CD4-positive, alpha-beta memory T cell (primary cell): ENCODE measurements at regions of chr5 and their contacts with region 1.

Region 1: GRCh38 chr5:50667653-50668595 is 1.5 kb downstream of the PARP8 start:
- DNase-seq: peak; percentile 88 to 94 (median 91)
- H3K4me3 ChIP-seq: peak overlapping the region; percentile 65 to 68
- H3K4me3 Mint-ChIP-seq: peak overlapping the region; percentile 91 to 98 (median 96)
- H3K27ac ChIP-seq: peak overlapping the region; percentile 99
- H3K27ac Mint-ChIP-seq: peak overlapping the region; percentile 96 to 100 (median 99)
- H3K4me1 ChIP-seq: peaks cover 51% of the 10 kb centered on the region
- H3K4me1 Mint-ChIP-seq: peaks cover 32 to 69% (median 44%) of the 10 kb centered on the region in 4 donors
- H3K27me3 ChIP-seq: no peaks in the 10 kb centered on the region
- H3K27me3 Mint-ChIP-seq: peaks cover 0 to 4% of the 10 kb centered on the region in 2 donors

Region 2: DNA sequence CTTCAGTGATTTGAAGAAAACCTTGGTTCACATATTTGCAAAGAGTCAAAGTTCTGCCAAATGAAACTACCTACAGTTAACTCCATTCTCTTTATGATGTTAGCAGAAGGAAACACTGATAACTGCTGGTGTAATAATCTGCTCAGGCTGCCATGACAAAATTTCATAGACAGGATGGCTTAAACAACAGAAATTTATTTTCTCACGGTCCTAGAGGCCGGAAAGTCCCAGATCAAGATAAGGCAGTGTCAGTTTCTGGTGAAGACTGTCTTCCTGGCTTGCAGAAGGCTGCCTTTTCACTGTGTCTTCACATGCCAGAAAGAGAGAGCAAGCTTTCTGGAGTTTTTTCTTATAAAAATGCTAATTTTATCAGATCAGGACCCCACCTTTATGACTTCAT is 103.8 kb before region 1 on chr5:
- CTCF ChIA-PET with region 1: no interaction called
- POLR2A ChIA-PET with region 1: interaction called, 3 read pairs
- intact Hi-C with region 1: loop called (anchors 5 kb)
- DNase-seq: peak; percentile 37 to 79 (median 66)
- H3K4me3 ChIP-seq: no peak overlapping the region
- H3K4me3 Mint-ChIP-seq: peak overlapping the region in 7 of 8 donors; percentile 17 to 80 (median 70)
- H3K27ac ChIP-seq: peak overlapping the region; percentile 32
- H3K27ac Mint-ChIP-seq: peak overlapping the region; percentile 36 to 91 (median 75)
- H3K4me1 ChIP-seq: peaks cover 32% of the 10 kb centered on the region
- H3K4me1 Mint-ChIP-seq: peaks cover 19 to 51% (median 38%) of the 10 kb centered on the region in 4 donors
- H3K27me3 ChIP-seq: no peaks in the 10 kb centered on the region
- H3K27me3 Mint-ChIP-seq: no peaks in the 10 kb centered on the region

Region 3: DNA sequence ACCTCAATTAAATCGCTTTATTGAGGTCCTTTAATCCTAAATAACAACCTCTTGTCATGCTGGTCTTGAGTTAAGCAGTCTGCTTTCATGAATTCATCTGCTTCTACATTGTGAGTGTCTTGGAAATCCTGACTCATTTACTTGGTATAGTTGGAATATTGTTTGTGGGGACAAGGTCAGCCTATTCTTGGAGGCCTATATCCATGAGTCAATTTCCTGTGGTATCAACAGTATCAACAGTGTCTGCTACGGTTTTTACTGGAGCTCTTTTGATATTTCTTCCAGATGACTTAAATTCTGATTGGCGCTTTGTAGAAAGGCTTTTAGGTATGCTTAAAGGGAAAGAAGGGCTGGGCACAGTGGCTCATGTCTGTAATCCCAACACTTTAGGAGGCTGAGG is 72.7 kb before region 1 on chr5:
- CTCF ChIA-PET with region 1: interaction called, 3 read pairs
- POLR2A ChIA-PET with region 1: interaction called, 4 read pairs
- intact Hi-C with region 1: loop called (anchors 1 kb)
- DNase-seq: no peak
- H3K4me3 ChIP-seq: no peak overlapping the region
- H3K4me3 Mint-ChIP-seq: peak overlapping the region in 2 of 8 donors; percentile 31 to 57
- H3K27ac ChIP-seq: no peak overlapping the region
- H3K27ac Mint-ChIP-seq: peak overlapping the region in 5 of 7 donors; percentile 46 to 90 (median 64)
- H3K4me1 ChIP-seq: peaks cover 56% of the 10 kb centered on the region
- H3K4me1 Mint-ChIP-seq: peaks cover 39 to 65% (median 46%) of the 10 kb centered on the region in 4 donors
- H3K27me3 ChIP-seq: no peaks in the 10 kb centered on the region
- H3K27me3 Mint-ChIP-seq: no peaks in the 10 kb centered on the region

Region 4: GRCh38 chr5:50702615-50703366 is 34.9 kb after region 1 on chr5:
- CTCF ChIA-PET with region 1: no interaction called
- POLR2A ChIA-PET with region 1: interaction called, 16 read pairs
- intact Hi-C with region 1: no loop called
- DNase-seq: peak in 3 of 5 donors; percentile 15 to 22 (median 19)
- H3K4me3 ChIP-seq: no peak overlapping the region
- H3K4me3 Mint-ChIP-seq: peak overlapping the region in 7 of 8 donors; percentile 62 to 81 (median 77)
- H3K27ac ChIP-seq: no peak overlapping the region
- H3K27ac Mint-ChIP-seq: peak overlapping the region; percentile 82 to 98 (median 94)
- H3K4me1 ChIP-seq: peaks cover 93% of the 10 kb centered on the region
- H3K4me1 Mint-ChIP-seq: peaks cover 60 to 98% (median 76%) of the 10 kb centered on the region in 4 donors
- H3K27me3 ChIP-seq: no peaks in the 10 kb centered on the region
- H3K27me3 Mint-ChIP-seq: no peaks in the 10 kb centered on the region

Region 5: GRCh38 chr5:50738864-50739263 is 70.9 kb after region 1 on chr5:
- CTCF ChIA-PET with region 1: interaction called, 3 read pairs
- POLR2A ChIA-PET with region 1: interaction called, 23 read pairs
- intact Hi-C with region 1: loop called (anchors 1 kb)
- DNase-seq: no peak
- H3K4me3 ChIP-seq: no peak overlapping the region
- H3K4me3 Mint-ChIP-seq: no peak overlapping the region
- H3K27ac ChIP-seq: no peak overlapping the region
- H3K27ac Mint-ChIP-seq: peak overlapping the region in 5 of 7 donors; percentile 27 to 79 (median 62)
- H3K4me1 ChIP-seq: peaks cover 69% of the 10 kb centered on the region
- H3K4me1 Mint-ChIP-seq: peaks cover 53 to 80% (median 67%) of the 10 kb centered on the region in 4 donors
- H3K27me3 ChIP-seq: no peaks in the 10 kb centered on the region
- H3K27me3 Mint-ChIP-seq: no peaks in the 10 kb centered on the region

Region 6: DNA sequence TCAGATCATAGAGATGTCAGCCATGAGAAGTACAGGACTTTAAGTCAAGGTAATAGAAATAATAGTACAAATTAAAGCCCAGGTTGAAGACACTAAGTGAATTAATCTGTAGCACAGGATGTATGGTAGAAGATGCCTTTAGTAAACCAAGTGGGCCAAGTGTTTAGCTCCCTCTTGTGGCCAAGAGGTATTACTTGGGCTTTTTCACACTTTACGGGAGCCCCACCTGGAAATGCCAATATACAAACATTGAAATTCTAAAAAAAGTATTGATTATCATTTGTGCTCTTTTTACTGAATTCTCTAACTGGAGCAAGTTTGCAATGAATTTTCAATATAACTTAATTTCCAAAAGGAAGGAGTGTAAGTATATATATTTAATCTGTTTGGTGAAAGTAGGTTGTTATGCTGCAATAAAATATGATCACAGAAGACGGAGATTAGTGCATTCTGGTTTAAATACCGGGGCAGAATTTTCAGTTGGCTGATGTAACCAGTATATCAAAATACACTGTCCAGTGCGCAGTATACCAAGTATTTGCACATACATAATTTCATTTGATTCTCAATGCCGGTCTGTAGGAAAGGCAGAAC is 83.2 kb after region 1 on chr5:
- CTCF ChIA-PET with region 1: interaction called, 3 read pairs
- POLR2A ChIA-PET with region 1: interaction called, 25 read pairs
- intact Hi-C with region 1: loop called (anchors 1 kb)
- DNase-seq: peak; percentile 68 to 75 (median 70)
- H3K4me3 ChIP-seq: no peak overlapping the region
- H3K4me3 Mint-ChIP-seq: peak overlapping the region in 7 of 8 donors; percentile 46 to 84 (median 70)
- H3K27ac ChIP-seq: peak overlapping the region; percentile 25
- H3K27ac Mint-ChIP-seq: peak overlapping the region; percentile 77 to 91 (median 90)
- H3K4me1 ChIP-seq: peaks cover 52% of the 10 kb centered on the region
- H3K4me1 Mint-ChIP-seq: peaks cover 41 to 68% (median 56%) of the 10 kb centered on the region in 4 donors
- H3K27me3 ChIP-seq: no peaks in the 10 kb centered on the region
- H3K27me3 Mint-ChIP-seq: no peaks in the 10 kb centered on the region

Region 7: GRCh38 chr5:51336878-51337277 is 669.0 kb after region 1 on chr5:
- CTCF ChIA-PET with region 1: no interaction called
- POLR2A ChIA-PET with region 1: no interaction called
- intact Hi-C with region 1: no loop called
- DNase-seq: no peak
- H3K4me3 ChIP-seq: no peak overlapping the region
- H3K4me3 Mint-ChIP-seq: no peak overlapping the region
- H3K27ac ChIP-seq: no peak overlapping the region
- H3K27ac Mint-ChIP-seq: no peak overlapping the region
- H3K4me1 ChIP-seq: no peaks in the 10 kb centered on the region
- H3K4me1 Mint-ChIP-seq: no peaks in the 10 kb centered on the region
- H3K27me3 ChIP-seq: no peaks in the 10 kb centered on the region
- H3K27me3 Mint-ChIP-seq: no peaks in the 10 kb centered on the region